GM10248 (cell line): ENCODE measurements at regions of chr1 and their contacts with region 1.

Region 1: GRCh38 chr1:229258031-229258756 is 12.7 kb upstream of the RAB4A start:
- DNase-seq: peak; percentile 58
- CTCF ChIP-seq: peak; percentile 60

Region 2: DNA sequence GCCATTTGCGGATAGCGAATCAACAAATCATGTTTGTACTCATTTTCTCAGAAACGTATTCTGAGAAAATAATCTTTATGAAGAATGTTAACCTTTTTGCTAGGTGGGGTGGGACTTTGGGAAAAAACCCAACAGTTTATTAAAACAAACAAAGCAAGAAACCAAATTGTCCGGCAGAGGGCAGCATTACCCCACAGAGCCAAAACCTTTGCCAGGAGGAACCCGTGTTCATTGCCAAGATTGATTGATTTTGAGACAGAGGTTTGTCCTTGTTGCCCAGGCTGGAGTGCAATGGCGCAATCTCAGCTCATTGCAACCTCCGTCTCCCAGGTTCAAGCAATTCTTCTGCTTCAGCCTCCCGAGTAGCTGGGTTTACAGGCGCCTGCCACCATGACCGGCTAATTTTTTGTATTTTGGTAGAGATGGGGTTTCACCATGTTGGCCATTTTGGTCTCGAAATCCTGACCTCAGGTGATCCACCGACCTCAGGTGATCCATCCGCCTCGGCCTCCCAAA is 593.7 kb before region 1 on chr1:
- CTCF ChIA-PET with region 1: interaction called, 27 read pairs
- POLR2A ChIA-PET with region 1: no interaction called
- DNase-seq: peak; percentile 73
- CTCF ChIP-seq: peak; percentile 65

Region 3: DNA sequence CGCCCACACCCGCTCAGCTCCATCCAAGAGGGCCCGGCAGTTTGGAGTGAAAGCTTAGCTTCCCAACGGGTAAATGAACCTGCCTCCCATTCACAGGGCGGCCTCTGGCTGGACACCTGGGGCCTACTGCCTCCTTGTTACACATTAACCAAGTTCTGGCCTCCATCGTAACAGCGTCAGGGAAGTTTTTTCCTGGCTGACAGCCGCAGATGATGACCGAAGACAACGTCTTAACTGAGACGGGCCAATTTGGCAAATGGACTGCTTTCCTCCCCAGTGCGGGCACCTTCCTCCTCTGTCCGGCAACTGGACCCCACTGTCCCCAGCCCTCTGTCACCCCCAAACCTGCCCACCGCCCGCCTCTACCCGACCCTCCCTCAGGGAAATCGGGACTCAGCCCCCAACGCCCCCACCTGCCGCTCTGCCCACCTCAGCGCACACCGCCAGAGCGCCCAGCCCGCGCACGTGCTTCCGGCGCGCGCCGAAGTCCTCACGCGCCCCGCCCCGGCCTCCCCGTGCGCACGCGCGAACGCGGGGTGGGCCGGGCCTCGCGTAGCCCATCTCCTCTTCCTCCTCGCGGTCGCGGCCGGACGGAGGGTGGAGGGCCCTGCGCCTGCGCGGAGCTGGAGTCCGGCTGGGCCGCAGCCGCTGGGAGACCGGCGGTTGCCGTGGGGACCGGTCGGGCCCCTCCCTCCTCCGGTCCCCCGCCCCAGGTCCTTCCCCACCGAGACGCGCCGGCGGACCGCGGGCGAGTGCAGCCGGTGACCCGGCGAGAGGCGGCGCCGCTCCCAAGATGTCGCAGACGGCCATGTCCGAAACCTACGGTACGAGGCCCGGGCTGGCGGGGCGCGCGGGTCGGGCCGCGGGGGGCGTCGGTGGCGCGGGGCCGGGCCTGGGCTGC is 12.6 kb after region 1 on chr1 and contains the start of gene RAB4A:
- CTCF ChIA-PET with region 1: interaction called, 17 read pairs
- POLR2A ChIA-PET with region 1: no interaction called
- DNase-seq: peak; percentile 96
- CTCF ChIP-seq: no peak

Region 4: DNA sequence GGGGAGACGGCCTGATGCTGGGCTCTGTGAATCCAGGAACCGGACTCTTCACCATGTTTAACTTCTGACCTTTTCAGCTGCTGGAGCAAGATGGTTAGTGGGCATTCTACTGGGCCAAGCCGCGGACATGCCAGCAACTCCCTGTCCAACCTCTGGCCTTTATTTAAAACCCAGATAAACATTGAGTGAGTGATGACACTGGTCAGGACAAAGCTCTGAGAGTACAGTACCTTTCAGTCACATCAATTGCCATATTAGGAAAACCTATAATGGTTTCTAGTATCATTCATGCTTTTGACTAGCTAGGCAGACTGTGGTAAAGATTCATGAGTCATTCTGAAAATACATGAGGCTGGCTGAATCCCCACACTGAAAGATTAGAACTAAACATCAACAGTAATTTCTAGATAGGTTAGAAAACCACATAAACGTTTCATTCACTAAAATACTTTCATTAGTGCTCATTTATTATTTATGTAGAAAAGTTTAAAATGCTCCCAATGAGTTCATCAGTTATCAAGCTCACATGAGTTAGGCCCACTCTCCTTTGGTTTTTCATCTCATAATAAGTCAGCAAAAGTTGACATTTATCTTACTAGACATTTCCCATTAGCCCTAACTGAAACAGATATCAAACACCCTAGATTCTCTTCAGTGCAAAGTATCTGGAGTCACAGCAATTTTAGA is 182.8 kb after region 1 on chr1:
- CTCF ChIA-PET with region 1: interaction called, 10 read pairs
- POLR2A ChIA-PET with region 1: no interaction called
- DNase-seq: peak; percentile 79
- CTCF ChIP-seq: no peak

Region 5: GRCh38 chr1:229479660-229480399 is 221.6 kb after region 1 on chr1:
- CTCF ChIA-PET with region 1: interaction called, 126 read pairs
- POLR2A ChIA-PET with region 1: no interaction called
- DNase-seq: peak; percentile 62
- CTCF ChIP-seq: no peak

Region 6: DNA sequence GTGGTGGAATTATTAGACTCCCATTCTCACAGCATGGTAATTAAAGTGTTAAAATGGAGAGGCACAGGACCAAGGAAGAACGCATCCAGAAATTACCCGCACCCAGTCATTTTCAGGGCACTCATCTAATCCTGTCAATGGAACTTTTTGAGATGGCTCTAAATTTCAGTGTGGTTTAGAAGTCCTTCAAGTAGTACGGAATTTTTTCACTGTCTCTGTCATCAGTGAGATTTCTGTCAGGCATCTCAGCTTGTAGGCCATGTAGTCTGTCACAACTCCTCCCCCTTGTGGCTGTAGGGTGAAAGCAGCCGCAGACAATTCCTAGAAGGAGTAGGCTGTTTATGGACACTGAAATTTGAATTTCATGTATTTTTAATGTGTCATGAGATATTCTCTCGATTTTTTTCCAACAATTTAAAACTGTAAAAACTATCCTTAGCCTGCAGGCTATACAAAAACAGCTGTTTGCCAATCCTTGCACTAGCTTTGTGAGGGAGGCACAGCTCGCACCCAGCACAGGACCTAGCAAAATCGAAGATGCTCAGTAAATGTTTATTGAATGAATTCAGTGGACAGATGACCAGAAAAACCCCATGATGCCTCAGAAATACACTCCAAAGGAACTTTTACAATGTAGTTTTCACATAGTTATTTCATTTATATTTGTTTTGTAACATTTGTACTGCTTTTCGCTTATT is 256.5 kb after region 1 on chr1:
- CTCF ChIA-PET with region 1: interaction called, 19 read pairs
- POLR2A ChIA-PET with region 1: no interaction called
- DNase-seq: peak; percentile 54
- CTCF ChIP-seq: peak; percentile 80